ENCODE measurements at regions of chr7 and their contacts with region 1.

Region 1: GRCh38 chr7:128830231-128831177 is at the start of gene FLNC:
- DNase-seq: no peak
- H3K4me3 ChIP-seq: peak within 1 kb of the TSS; percentile 95
- CTCF ChIP-seq: no peak

Region 2: GRCh38 chr7:128739048-128739962 is 91.2 kb before region 1 on chr7 and contains the start of gene CALU:
- CTCF ChIA-PET with region 1: interaction called, 9 read pairs
- POLR2A ChIA-PET with region 1: interaction called, 39 read pairs
- DNase-seq: peak; percentile 79
- H3K4me3 ChIP-seq: peak within 1 kb of the TSS; percentile 97
- CTCF ChIP-seq: no peak

Region 3: GRCh38 chr7:128755819-128756476 is 74.6 kb before region 1 on chr7:
- CTCF ChIA-PET with region 1: no interaction called
- POLR2A ChIA-PET with region 1: interaction called, 11 read pairs
- DNase-seq: peak; percentile 90
- H3K4me3 ChIP-seq: no peak overlapping the region
- CTCF ChIP-seq: no peak

Region 4: GRCh38 chr7:128783143-128783861 is 47.2 kb before region 1 on chr7:
- CTCF ChIA-PET with region 1: interaction called, 4 read pairs
- POLR2A ChIA-PET with region 1: interaction called, 11 read pairs
- DNase-seq: peak; percentile 45
- H3K4me3 ChIP-seq: peak overlapping the region; percentile 29
- CTCF ChIP-seq: no peak

Region 5: DNA sequence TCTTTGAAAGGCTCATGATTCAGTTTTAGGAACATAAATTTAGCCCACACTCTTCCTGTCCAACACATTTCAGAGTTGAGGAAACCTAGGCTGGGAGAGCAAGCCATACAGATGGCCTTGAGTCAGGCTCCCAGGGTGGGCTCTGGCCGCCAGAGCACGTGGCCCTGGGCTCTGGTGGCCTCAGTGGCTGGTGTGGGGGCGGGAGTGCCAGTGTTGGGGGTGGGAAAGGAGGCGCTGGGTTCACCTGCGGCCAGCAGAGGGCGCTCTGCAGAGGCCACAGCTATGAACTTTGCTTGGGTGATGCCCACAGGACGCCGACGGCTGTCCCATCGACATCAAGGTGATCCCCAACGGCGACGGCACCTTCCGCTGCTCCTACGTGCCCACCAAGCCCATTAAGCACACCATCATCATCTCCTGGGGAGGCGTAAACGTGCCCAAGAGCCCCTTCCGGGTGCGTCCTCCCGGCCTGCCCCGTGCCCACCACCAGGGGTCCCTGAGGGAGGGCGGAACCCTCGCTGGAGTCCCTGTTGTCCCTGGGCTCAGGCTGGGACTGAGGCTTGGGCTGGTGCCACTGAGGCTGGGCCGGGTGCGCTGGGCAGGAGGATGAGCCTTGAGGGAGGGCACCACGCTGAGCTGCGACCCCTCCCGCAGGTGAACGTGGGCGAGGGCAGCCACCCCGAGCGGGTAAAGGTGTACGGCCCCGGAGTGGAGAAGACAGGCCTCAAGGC is 11.6 kb after region 1 on chr7:
- CTCF ChIA-PET with region 1: interaction called, 17 read pairs
- POLR2A ChIA-PET with region 1: interaction called, 4 read pairs
- DNase-seq: no peak
- H3K4me3 ChIP-seq: no peak overlapping the region
- CTCF ChIP-seq: peak; percentile 69

Region 6: GRCh38 chr7:128862571-128863432 is 32.3 kb after region 1 on chr7 and contains the start of gene ATP6V1F:
- CTCF ChIA-PET with region 1: interaction called, 5 read pairs
- POLR2A ChIA-PET with region 1: interaction called, 20 read pairs
- DNase-seq: peak; percentile 71
- H3K4me3 ChIP-seq: peak within 1 kb of the TSS; percentile 85
- CTCF ChIP-seq: no peak

Region 7: GRCh38 chr7:129122751-129123509 is 292.4 kb after region 1 on chr7:
- CTCF ChIA-PET with region 1: no interaction called
- POLR2A ChIA-PET with region 1: no interaction called
- DNase-seq: no peak
- H3K4me3 ChIP-seq: no peak overlapping the region
- CTCF ChIP-seq: no peak

Region 8: DNA sequence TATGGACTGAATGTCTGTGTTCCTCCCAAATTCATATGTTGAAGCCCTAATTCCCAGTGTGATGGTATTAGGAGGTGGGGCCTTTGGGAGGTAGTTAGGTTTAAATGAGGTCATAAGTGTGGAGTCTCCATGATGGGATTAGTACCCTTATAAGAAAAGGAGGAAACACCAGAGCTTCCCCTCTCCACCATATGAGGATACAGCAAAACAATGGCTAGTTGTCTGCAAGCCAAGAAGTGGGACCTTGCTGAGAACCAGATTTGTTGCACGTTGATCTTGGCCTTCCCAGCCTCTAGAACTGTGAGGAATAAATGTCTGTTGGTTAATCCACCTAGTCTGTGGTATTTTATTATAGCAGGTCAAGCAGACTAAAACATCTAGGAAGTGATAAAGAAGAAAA is 496.6 kb after region 1 on chr7:
- CTCF ChIA-PET with region 1: no interaction called
- POLR2A ChIA-PET with region 1: no interaction called
- DNase-seq: no peak
- H3K4me3 ChIP-seq: no peak overlapping the region
- CTCF ChIP-seq: no peak

Measured in AG04449 (cell line).